Activated naive CD8-positive, alpha-beta T cell treated with anti-CD3 and anti-CD28 coated beads, Interleukin-2, amount 10 ng/mL, durations not matched to agents 7 days and 5 days (primary cell): ENCODE measurements at regions of chr2 and their contacts with region 1.

Region 1: DNA sequence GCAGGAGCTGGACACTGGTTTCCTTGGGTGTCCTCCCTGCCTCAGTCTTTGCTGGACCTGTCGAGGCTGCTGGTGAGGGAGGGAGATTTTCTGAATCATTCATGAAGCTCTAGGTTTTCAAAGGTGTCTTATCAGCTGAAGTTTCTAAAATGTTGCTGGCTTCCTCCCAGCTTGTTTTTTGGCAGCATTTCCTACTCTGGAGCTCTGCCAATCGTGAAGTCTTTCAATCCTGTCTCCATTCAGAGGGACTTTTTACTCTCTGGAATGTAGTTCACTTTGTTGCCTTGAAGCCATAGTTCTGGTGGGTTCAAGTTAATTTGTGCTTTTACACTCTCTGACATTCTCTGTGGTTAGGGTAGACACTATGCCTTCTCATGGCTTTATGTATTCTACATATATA is 23.9 kb downstream of the SNTG2 start:
- DNase-seq: no peak
- ATAC-seq: peak; percentile 35
- H3K4me3 Mint-ChIP-seq: peak overlapping the region; percentile 67
- H3K27ac Mint-ChIP-seq: peak overlapping the region; percentile 91
- H3K4me1 Mint-ChIP-seq: peaks cover 62% of the 10 kb centered on the region
- H3K27me3 Mint-ChIP-seq: no peaks in the 10 kb centered on the region

Region 2: GRCh38 chr2:950080-950966 is 24.2 kb before region 1 on chr2 and contains the start of gene SNTG2:
- POLR2A ChIA-PET with region 1: interaction called, 31 read pairs
- DNase-seq: peak; percentile 89
- ATAC-seq: peak; percentile 85
- H3K4me3 Mint-ChIP-seq: peak within 1 kb of the TSS; percentile 87
- H3K27ac Mint-ChIP-seq: peak within 1 kb of the TSS; percentile 81
- H3K4me1 Mint-ChIP-seq: peaks cover 35% of the 10 kb centered on the region
- H3K27me3 Mint-ChIP-seq: peaks cover 16% of the 10 kb centered on the region
- total RNA-seq, gene SNTG2: 2.9 to 3.5 TPM

Region 3: GRCh38 chr2:985317-985898 is 10.9 kb after region 1 on chr2:
- POLR2A ChIA-PET with region 1: interaction called, 35 read pairs
- DNase-seq: no peak
- ATAC-seq: peak; percentile 69
- H3K4me3 Mint-ChIP-seq: peak overlapping the region; percentile 64
- H3K27ac Mint-ChIP-seq: peak overlapping the region; percentile 85
- H3K4me1 Mint-ChIP-seq: peaks cover 28% of the 10 kb centered on the region
- H3K27me3 Mint-ChIP-seq: peaks cover 3% of the 10 kb centered on the region